Posterior cingulate gyrus (tissue), 11 donors: ENCODE measurements at regions of chr10 and their contacts with region 1.

Region 1: GRCh38 chr10:101569838-101570766 is 18.0 kb downstream of the POLL start:
- DNase-seq: peak; percentile 62 to 97 (median 80)

Region 2: DNA sequence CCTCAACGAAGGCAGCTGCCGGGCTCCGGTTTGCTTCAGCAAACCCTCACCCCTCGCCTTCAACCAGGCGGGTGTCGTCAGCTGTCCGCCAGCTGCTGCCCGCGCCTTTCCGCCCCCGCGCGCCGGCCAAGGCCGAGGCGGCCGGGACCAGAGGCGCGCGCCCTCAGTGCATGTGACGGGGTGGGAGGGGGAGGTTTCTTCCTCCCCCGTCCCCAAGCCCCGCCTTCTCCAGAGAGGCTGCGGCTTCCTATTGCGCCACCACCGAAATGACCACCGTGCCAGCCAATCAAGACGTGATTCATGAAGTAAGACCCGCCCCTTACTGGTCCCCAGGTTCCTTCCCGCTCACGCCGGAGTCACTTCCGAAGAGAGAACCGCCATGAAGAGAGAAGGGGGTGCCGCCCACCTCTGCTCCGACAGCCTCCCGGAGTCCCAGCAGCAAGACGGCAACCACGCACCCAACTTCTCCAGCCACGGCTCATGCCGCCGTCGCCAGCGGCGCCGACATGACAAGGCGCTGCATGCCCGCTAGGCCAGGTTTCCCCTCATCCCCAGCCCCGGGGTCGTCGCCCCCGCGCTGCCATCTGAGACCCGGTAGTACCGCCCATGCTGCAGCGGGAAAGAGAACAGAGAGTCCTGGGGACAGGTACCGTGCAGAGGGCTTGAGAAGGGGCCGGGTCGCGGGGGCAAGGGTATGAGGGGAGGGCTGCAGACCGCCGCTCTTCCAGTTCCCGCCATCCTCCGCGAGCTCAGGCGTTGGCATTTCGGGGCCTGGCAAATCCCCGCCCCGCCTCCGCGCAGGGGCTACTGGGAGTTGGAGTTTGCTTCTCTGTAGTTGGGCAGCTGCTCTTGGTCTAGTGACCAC is 657.3 kb before region 1 on chr10 and contains the start of gene SLF2:
- intact Hi-C with region 1: no loop called
- DNase-seq: peak; percentile 96 to 100 (median 98)

Region 3: GRCh38 chr10:101182936-101183335 is 387.2 kb before region 1 on chr10:
- intact Hi-C with region 1: no loop called
- DNase-seq: no peak

Region 4: DNA sequence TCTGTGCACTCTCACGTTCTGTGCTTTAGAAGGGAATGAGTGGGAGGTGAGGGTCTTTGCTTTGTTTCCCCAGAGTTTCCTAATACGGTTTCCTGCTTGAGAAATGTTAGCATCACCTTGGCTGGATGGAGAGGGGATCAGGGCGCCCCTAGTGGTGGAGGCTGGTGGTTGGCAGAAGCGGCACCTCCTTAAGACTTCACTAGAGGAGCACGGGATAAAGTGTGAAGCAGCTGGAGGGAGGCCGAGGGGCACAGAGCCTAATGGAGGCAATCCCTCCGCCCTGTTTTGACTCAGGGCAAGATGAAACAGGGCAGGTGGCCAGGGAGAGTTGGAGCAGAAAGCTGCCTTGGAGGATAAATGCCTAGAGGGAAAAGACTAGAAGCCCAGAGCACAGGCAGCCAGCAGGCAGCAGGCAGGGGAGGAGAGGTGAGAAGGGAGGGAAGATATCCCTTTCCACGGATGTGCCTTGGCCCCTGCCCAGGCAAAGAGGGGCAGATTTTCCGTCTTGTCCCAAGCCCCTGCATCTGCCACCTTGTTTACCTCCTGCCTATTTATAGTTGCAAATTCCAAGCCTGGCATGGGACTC is 272.1 kb before region 1 on chr10:
- intact Hi-C with region 1: loop called (anchors 10 kb)
- DNase-seq: peak in 9 of 10 donors; percentile 55 to 93 (median 61)

Region 5: DNA sequence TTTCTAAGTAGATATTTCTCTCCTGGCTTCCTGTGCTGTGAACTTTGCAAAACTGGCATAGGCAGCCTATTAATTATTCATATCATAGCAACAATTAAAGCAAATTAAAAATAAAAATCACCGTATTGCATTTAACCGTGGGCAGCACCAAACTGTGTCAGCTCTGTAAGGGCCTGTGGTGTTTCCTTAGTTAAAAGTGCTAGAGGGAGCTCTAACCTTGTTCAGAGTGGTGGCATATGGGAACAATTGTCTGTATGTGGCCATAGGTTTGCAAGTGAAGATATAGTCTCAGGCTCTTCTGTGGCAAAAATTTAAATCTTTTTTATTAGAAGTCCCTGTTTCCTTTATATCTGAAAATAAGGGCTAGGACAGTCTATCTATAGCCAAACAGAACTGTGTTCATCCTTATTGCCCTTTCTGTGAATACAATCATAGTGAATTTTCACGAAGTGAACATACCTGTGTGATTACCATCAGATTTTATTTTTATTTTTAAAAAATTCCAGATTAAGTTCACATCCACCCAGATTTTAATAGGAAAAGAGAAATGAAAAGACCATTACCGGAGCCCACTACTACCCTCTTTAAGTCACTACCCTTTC is 74.7 kb before region 1 on chr10:
- intact Hi-C with region 1: loop called (anchors 10 kb)
- DNase-seq: no peak

Region 6: GRCh38 chr10:101617102-101617823 is 47.2 kb after region 1 on chr10:
- intact Hi-C with region 1: no loop called
- DNase-seq: no peak

Region 7: GRCh38 chr10:101807158-101807557 is 237.1 kb after region 1 on chr10:
- intact Hi-C with region 1: no loop called
- DNase-seq: no peak